ENCODE measurements at regions of chr3 and their contacts with region 1.

Region 1: GRCh38 chr3:142279965-142280590 is 54.7 kb upstream of the GK5 start:
- DNase-seq: peak; percentile 54
- H3K4me3 ChIP-seq: no peak overlapping the region
- H3K27ac ChIP-seq: no peak overlapping the region
- H3K4me1 ChIP-seq: no peaks in the 10 kb centered on the region
- H3K27me3 ChIP-seq: no peaks in the 10 kb centered on the region
- CTCF ChIP-seq: peak in 3 of 4 experiments; percentile 60 to 75 (median 72)
- POLR2A ChIP-seq: no peak

Region 2: DNA sequence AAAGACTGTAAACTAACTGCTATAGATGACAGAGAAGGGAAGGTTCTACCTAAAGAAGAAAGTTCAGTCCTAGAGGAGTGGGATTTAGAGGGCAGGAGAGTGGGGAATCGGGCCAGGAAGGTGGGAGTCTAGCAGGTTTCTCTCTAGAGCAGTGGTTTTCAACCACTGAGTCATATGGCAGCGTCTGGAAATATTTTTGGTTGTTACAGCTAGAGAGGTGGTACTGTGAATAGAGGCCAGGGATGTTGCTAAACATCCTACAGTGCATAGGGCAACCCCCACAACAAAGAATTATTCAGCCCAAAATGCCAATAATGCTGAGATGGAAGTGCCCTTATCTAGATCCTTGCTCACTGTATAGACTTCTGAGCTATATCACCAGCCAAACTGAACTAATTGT is 374.9 kb before region 1 on chr3:
- intact Hi-C with region 1: no loop called
- DNase-seq: no peak
- H3K4me3 ChIP-seq: no peak overlapping the region
- H3K27ac ChIP-seq: no peak overlapping the region
- H3K4me1 ChIP-seq: no peaks in the 10 kb centered on the region
- H3K27me3 ChIP-seq: no peaks in the 10 kb centered on the region
- CTCF ChIP-seq: no peak
- POLR2A ChIP-seq: no peak

Region 3: DNA sequence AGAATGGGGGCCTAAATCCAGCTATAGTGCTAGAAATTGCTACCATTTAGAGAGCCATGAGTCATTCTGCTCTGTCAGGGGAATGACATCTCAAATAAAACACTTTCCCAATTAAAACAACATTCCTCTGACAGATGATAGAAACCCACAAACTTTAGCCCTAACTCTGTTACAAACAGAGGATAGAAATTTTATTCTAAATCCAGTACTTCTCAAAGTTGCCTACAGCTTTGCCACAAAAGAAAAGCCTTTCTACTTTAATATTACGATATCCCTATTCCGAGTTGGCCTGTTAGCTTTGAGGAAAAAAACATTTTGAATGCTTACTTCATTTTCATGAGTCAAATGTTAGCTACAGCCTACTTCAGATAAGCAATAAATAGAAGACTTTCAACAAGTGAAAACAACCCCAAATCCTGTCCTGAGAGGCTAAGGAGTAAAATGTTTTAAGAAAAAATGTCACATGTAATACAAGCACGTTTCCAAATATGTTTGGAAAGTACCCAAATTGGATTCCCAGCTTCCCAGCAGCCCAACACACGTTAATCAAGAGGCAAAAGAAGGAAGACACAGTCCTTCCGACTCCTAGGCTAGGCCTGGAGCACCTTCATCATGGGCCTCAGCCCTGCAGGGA is 320.0 kb before region 1 on chr3:
- intact Hi-C with region 1: loop called (anchors 5 kb)
- DNase-seq: no peak
- H3K4me3 ChIP-seq: no peak overlapping the region
- H3K27ac ChIP-seq: no peak overlapping the region
- H3K4me1 ChIP-seq: no peaks in the 10 kb centered on the region
- H3K27me3 ChIP-seq: no peaks in the 10 kb centered on the region
- CTCF ChIP-seq: no peak
- POLR2A ChIP-seq: no peak

Region 4: GRCh38 chr3:142127941-142128658 is 152.0 kb before region 1 on chr3:
- intact Hi-C with region 1: loop called (anchors 2 kb)
- DNase-seq: no peak
- H3K4me3 ChIP-seq: no peak overlapping the region
- H3K27ac ChIP-seq: peak overlapping the region; percentile 44 to 50
- H3K4me1 ChIP-seq: no peaks in the 10 kb centered on the region
- H3K27me3 ChIP-seq: no peaks in the 10 kb centered on the region
- CTCF ChIP-seq: no peak
- POLR2A ChIP-seq: no peak

Region 5: DNA sequence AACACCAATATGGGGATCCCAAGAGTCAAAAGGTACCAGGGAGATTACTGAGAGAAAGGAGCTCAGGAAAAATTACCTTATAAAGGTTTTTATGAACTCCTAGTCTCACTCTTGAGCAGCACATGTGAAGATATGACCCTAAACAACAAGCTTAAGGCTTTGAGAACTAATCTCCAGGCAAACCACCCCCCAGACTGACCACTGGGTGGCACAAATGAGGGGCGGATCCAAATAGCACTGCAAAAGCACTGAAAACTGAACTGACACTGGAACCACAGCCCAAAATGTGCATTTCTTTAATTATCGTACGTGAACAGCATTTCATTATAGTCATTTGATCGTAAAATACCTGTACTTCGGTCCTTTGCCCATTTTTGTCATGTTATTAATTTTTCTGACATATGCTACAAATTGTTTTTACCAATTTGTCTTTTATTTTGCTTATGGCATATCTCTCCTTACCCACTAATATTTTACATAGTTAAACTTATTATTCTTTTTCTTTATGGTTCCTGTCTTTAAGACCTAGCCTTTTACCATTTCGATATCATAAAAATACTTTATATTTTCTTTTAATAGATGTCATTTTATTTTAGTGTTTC is 99.2 kb before region 1 on chr3:
- intact Hi-C with region 1: loop called (anchors 2 kb)
- DNase-seq: peak; percentile 8
- H3K4me3 ChIP-seq: no peak overlapping the region
- H3K27ac ChIP-seq: no peak overlapping the region
- H3K4me1 ChIP-seq: no peaks in the 10 kb centered on the region
- H3K27me3 ChIP-seq: no peaks in the 10 kb centered on the region
- CTCF ChIP-seq: peak; percentile 18 to 54 (median 28)
- POLR2A ChIP-seq: no peak

Region 6: GRCh38 chr3:142888481-142889211 is 608.6 kb after region 1 on chr3 and contains the start of gene PCOLCE2:
- intact Hi-C with region 1: no loop called
- DNase-seq: no peak
- H3K4me3 ChIP-seq: peak within 1 kb of the TSS; percentile 33 to 37
- H3K27ac ChIP-seq: peak within 1 kb of the TSS; percentile 5 to 64
- H3K4me1 ChIP-seq: no peaks in the 10 kb centered on the region
- H3K27me3 ChIP-seq: no peaks in the 10 kb centered on the region
- CTCF ChIP-seq: no peak
- POLR2A ChIP-seq: no peak
- total RNA-seq, gene PCOLCE2: 11.0 to 14.2 TPM